ENCODE measurements at regions of chr12 and their contacts with region 1.

Region 1: DNA sequence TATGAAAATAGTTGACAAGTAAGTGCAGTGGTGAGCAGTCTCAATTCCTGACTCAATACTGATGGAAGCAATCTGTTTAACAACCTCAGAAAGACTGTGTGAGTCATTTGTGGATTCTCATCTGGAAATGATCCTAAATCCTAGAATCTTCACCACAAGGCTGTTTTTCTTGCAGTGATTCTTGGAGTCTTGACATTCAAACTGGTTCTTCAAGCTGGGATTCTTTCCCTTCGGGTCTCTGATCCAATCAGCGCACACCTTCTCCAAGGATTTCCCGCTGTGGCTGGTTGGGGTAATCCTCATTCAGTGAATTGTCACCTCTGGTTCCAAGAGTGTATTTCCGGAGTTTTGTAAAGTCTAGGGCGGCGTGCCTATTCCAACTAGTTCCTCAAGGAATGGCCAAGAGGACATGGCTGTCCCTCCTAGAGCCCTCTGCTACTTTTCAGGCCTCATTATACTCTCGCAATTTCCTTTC is 37.7 kb upstream of the FOXJ2 start:
- DNase-seq: no peak
- ATAC-seq: peak; percentile 20

Region 2: DNA sequence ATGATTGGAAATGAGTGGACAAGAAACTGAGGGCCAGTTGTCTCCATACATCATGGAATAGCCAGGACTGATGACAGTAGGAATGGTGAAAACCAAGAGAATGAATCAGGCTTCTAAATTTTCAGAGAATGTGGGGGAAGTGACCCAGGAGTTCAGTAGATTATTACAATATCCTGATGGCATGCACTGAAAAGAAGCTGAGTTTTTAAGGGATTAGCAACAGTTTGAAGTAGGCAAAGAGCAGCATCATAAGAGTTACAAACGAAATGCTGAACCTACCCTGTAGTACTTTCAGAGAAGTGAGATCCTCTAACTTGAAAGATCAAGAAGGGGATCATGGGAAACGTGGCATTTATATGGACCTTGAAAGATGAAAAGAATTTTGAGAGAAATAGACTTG is 135.2 kb before region 1 on chr12:
- intact Hi-C with region 1: loop called (anchors 5 kb)
- DNase-seq: no peak
- ATAC-seq: no peak

Region 3: GRCh38 chr12:8078398-8078797 is 83.6 kb after region 1 on chr12:
- intact Hi-C with region 1: no loop called
- DNase-seq: no peak
- ATAC-seq: no peak